Activated B cell treated with CpG ODN at 0.5 μM for 24 hours (primary cell): ENCODE measurements at regions of chr20 and their contacts with region 1.

Region 1: DNA sequence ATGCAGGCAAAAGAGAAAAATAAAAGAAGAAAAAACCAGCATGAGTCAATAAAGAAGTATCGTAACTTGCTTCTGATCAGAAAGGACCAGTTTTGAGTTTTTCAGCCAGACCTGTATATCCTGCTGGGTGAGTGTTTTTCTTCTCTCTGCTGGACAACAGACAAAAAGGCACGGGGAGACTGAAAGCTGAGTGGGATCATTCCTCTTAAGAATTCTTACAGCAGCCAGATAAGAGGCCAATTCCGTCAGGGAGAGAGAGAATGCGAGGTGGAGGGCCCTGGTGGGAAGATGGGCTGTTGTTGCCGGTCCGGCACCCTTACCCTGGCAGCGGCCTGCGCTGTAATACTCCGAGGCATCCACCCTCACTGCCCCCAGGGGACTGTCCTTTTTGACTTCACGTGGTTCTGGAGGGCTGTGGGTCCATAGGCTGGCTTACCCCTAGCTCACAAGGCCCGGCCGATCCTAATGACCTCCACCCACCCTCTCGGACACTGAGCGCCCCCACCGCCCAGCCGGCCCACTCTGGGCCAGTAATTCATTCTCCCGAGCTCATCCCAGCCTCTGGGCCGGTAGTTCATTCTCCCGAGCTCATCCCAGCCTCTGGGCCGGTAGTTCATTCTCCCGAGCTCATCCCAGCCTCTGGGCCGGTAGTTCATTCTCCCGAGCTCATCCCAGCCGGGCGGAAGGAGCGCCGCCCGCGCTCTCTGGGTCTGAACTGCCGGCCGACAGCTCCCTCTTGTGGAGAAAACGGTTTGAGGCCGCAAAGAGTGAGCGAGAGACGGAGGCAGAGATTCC is 118.3 kb upstream of the SIRPA start:
- DNase-seq: peak; percentile 80
- ATAC-seq: peak; percentile 94
- H3K4me3 Mint-ChIP-seq: peak overlapping the region; percentile 83
- H3K27ac Mint-ChIP-seq: peak overlapping the region; percentile 57
- H3K4me1 Mint-ChIP-seq: peaks cover 17% of the 10 kb centered on the region
- H3K27me3 Mint-ChIP-seq: peaks cover 7% of the 10 kb centered on the region
- CTCF ChIP-seq: peak; percentile 22

Region 2: DNA sequence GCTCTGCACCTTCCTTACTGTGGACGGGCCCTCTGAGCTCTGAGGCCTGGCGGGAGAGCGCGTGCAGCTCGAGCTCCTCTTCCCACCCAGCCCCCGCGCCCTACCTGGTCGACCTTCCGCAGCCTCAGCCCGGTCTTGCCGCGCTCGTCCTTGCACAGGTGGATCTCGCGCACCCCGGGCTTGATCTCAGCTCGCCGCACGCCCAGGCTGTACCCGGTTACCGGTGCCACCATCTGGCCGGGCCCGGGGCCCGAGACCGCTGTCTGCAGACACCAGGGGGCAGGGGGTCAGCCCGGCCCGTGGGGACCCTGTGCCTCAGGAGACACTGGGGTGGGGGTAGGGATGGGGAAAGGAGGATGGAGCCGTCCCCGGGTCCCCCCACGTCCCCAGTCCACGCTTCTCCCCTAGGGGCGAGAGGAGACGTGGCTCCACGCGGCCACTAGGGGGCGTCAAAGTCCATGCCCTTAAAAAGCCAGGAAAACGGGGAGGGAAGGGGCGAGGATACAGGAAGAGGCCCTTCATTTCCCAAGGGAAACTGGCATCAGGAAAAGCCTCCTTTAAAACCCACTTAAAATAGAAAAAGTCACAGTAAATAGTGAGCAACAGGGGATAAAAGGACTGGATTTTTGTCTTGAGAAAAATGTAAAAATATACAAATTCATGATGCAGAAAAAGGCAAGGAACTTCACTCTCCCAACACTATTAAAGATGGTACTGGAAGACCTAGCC is 463.5 kb before region 1 on chr20:
- CTCF ChIA-PET with region 1: interaction called, 3 read pairs
- POLR2A ChIA-PET with region 1: no interaction called
- intact Hi-C with region 1: loop called (anchors 5 kb)
- DNase-seq: peak; percentile 53
- ATAC-seq: peak; percentile 77
- H3K4me3 Mint-ChIP-seq: no peak overlapping the region
- H3K27ac Mint-ChIP-seq: no peak overlapping the region
- H3K4me1 Mint-ChIP-seq: peaks cover 2% of the 10 kb centered on the region
- H3K27me3 Mint-ChIP-seq: no peaks in the 10 kb centered on the region
- CTCF ChIP-seq: peak; percentile 90

Region 3: DNA sequence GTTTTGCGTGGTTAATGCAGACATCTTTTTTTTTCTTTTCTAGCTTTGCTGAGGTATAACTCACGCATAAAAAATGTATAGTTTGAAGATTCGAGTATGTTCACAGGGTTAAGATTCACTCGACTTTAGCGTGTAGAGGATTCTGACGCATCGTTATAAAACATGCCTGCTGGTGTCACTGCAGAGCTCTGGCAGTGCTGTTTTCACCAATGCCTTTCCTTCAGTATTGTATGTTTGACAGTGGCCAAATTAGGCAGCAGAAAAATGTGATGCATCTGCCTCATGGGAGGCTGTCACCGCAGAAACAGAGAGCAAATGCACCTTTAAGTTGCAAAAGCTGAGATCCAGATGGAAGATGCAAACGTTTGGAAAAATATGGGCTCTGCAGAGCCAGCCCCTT is 267.6 kb before region 1 on chr20:
- CTCF ChIA-PET with region 1: interaction called, 23 read pairs
- POLR2A ChIA-PET with region 1: no interaction called
- intact Hi-C with region 1: loop called (anchors 1 kb)
- DNase-seq: no peak
- ATAC-seq: peak; percentile 57
- H3K4me3 Mint-ChIP-seq: no peak overlapping the region
- H3K27ac Mint-ChIP-seq: no peak overlapping the region
- H3K4me1 Mint-ChIP-seq: no peaks in the 10 kb centered on the region
- H3K27me3 Mint-ChIP-seq: peaks cover 17% of the 10 kb centered on the region
- CTCF ChIP-seq: no peak

Region 4: DNA sequence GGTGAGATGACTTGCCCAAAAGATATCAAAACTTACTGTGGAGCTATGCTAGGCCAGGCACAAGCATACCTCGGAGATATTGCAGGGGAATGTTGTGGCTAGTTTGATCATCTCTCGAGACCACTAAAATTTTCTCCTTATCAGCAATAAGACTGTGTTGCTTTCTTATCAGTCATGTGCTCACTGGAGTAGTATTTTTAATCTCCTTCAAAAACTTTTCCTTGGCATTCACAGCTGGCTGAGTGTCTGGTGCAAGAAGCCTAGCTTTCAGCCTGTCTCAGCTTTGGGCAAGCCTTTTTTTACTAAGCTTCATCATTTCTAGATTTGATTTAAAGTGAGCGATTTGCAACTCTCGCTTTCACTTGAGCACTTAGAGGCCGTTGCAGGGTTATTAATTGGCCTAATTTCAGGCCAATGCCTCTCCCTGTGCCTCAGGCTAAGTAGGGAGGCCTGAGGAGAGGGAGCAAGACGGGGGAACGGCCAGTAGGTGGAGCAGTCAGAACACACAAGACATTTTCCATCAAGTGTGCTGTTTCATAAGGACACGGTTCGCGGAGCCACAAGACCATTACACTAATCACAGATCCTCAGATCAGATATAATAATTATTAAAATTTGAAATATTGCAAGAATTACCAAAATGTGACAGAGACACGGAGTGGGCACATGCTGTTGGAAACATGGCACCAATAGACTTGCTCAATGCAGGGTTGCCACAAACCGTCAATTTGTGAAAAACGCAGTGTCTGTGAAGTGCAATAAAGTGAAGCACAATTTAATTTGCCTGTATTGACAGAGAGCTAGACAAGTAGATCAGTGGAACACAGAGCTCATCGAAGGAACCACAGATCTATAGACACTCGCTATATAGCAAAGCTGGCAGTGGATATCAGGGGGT is 12.5 kb before region 1 on chr20:
- CTCF ChIA-PET with region 1: interaction called, 33 read pairs
- POLR2A ChIA-PET with region 1: no interaction called
- intact Hi-C with region 1: no loop called
- DNase-seq: peak; percentile 46
- ATAC-seq: peak; percentile 86
- H3K4me3 Mint-ChIP-seq: no peak overlapping the region
- H3K27ac Mint-ChIP-seq: no peak overlapping the region
- H3K4me1 Mint-ChIP-seq: peaks cover 2% of the 10 kb centered on the region
- H3K27me3 Mint-ChIP-seq: peaks cover 5% of the 10 kb centered on the region
- CTCF ChIP-seq: peak; percentile 45

Region 5: GRCh38 chr20:1816384-1817381 is 39.8 kb after region 1 on chr20:
- CTCF ChIA-PET with region 1: no interaction called
- POLR2A ChIA-PET with region 1: no interaction called
- intact Hi-C with region 1: no loop called
- DNase-seq: no peak
- ATAC-seq: no peak
- H3K4me3 Mint-ChIP-seq: no peak overlapping the region
- H3K27ac Mint-ChIP-seq: no peak overlapping the region
- H3K4me1 Mint-ChIP-seq: peaks cover 29% of the 10 kb centered on the region
- H3K27me3 Mint-ChIP-seq: no peaks in the 10 kb centered on the region
- CTCF ChIP-seq: no peak

Region 6: GRCh38 chr20:1851396-1851795 is 74.5 kb after region 1 on chr20:
- CTCF ChIA-PET with region 1: interaction called, 4 read pairs
- POLR2A ChIA-PET with region 1: no interaction called
- intact Hi-C with region 1: loop called (anchors 2 kb)
- DNase-seq: no peak
- ATAC-seq: no peak
- H3K4me3 Mint-ChIP-seq: peak overlapping the region; percentile 63
- H3K27ac Mint-ChIP-seq: peak overlapping the region; percentile 85
- H3K4me1 Mint-ChIP-seq: peaks cover 66% of the 10 kb centered on the region
- H3K27me3 Mint-ChIP-seq: no peaks in the 10 kb centered on the region
- CTCF ChIP-seq: no peak

Region 7: DNA sequence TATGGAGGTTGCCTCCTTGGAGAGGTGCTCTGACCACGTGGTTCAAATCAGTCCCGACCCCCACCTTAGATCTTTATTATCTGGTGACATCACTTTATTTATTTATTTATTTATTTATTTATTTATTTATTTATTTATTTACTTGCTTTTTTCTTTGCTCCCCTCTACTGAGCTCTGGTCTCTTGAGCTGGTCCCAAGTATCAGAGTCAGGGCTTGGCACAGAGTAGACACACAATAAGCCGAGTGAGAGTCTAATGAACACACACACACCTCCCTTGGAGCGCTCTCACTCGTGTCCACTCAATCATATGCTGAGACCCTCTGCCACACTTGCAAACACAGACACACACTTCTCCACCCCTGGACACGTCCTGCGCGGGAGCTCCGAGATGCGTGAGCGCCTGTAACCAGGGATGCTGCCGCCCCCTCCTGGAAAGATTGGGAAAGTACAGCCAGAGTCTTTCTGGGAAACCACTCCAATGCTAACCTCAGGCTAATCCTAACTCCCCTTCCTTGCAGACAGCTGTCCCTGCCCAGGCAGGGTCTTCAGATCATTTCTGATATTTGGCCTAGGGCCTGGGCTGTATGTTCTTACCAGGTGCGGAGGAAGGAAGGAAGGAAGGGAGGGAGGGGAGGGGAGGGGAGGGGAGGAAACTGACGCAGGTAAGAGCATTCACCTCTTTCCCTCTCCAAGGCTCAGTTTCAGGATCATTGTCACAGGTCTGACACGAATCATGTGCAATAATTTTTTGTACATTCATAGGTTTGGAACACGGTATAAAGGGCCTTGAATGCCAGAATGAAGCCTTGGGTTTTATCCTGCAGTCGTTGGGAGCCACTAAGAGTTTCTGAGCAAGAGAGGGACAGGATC is 395.7 kb after region 1 on chr20:
- CTCF ChIA-PET with region 1: interaction called, 8 read pairs
- POLR2A ChIA-PET with region 1: no interaction called
- intact Hi-C with region 1: loop called (anchors 5 kb)
- DNase-seq: peak; percentile 53
- ATAC-seq: peak; percentile 83
- H3K4me3 Mint-ChIP-seq: no peak overlapping the region
- H3K27ac Mint-ChIP-seq: no peak overlapping the region
- H3K4me1 Mint-ChIP-seq: peaks cover 4% of the 10 kb centered on the region
- H3K27me3 Mint-ChIP-seq: peaks cover 11% of the 10 kb centered on the region
- CTCF ChIP-seq: no peak

Region 8: GRCh38 chr20:2451939-2452732 is 675.3 kb after region 1 on chr20:
- CTCF ChIA-PET with region 1: no interaction called
- POLR2A ChIA-PET with region 1: no interaction called
- intact Hi-C with region 1: loop called (anchors 5 kb)
- DNase-seq: peak; percentile 23
- ATAC-seq: peak; percentile 54
- H3K4me3 Mint-ChIP-seq: no peak overlapping the region
- H3K27ac Mint-ChIP-seq: no peak overlapping the region
- H3K4me1 Mint-ChIP-seq: peaks cover 2% of the 10 kb centered on the region
- H3K27me3 Mint-ChIP-seq: no peaks in the 10 kb centered on the region
- CTCF ChIP-seq: no peak